ENCODE measurements at regions of chr17 and their contacts with region 1.

Region 1: GRCh38 chr17:51166197-51166986 is at the start of gene NME2:
- DNase-seq: peak; percentile 97
- ATAC-seq: peak; percentile 98
- total RNA-seq, gene NME2: 278 TPM

Region 2: DNA sequence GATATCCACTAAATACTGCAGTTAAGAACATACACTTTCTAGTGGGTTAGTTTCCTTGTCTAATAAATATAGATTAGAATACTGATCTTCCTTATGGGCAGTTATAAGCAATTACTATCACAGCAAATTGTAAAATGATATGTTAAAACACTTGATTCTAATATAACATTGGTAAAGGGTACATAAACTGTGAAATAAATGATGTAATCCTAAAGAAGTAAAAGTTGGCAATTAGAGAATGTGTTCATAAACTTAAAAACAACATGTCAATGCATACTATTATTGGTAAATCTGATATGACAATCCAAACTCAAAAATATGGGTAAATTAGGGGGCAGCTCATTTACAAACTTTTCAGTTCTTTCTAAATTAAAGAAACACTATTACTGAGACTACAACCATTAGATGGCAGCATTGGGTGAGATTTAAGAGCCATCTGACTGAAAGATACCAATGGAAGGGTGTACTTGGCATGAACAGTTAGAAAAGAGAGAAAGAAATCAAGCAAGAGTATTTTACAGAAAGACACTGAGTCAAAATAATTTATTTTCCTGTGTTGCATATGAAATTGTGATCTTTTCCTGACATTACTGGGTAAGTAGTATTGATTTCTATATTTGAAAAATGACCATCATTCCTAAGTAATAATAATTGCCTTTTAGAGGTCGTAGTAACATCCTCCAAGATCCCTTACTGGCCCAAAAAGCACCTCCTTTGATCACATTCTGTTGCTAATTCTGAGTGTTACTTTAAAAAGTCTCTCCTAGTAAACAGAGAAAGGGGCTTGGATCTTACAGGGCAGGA is 165.4 kb before region 1 on chr17:
- intact Hi-C with region 1: loop called (anchors 1 kb)
- DNase-seq: no peak
- ATAC-seq: peak; percentile 48

Region 3: DNA sequence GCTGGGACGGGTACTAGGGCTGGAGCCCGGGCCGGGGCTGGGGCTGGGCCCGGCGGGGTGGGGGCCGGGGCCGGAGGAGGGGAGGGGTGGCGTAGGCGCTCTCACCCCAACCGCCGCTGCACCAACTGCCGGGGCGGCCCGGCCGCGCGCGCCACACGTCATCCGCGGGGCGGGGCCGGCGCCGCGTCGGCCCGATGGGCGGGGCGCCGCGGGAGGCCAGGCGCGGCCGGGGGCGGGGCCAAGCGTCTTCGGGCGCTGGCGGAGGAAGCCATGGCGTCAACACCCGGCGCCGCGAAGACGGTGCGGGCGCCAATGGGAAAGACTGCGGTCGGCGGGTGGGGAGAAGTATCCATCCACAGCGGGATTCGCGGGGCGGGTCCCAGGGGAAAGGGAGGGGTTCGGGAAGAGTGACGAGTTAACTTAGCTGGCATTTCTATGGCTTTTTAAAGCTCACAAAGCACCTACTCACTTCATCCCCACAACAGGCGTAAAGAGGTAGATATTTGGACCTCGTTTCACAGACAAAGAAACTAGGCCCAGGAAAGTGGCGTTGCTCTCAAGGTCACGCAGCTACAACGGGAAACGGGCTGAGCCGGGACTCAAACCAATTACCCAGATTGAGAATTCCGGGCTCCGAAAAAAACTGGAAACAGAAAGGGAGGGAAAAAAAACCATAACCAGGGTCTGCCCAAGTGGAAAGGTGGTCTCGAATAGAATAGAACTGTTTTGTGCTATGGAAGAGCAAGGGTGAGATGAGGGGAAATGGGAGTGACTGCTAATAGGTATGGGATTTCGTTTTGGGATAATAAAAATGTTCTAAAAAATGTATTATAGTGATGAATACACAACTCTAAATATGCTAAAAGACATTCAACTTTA is 45.4 kb before region 1 on chr17 and contains the start of gene SPAG9:
- intact Hi-C with region 1: loop called (anchors 1 kb)
- DNase-seq: peak; percentile 97
- ATAC-seq: peak; percentile 90
- total RNA-seq, gene SPAG9: 49.4 TPM

Region 4: GRCh38 chr17:51260125-51260880 is 93.9 kb after region 1 on chr17 and contains the start of gene UTP18:
- intact Hi-C with region 1: loop called (anchors 5 kb)
- DNase-seq: peak; percentile 98
- ATAC-seq: peak; percentile 97
- total RNA-seq, gene UTP18: 6.9 TPM

Measured in Right ventricle myocardium inferior (tissue), 1 donor.